HepG2 (cell line): ENCODE measurements at regions of chr13 and their contacts with region 1.

Region 1: GRCh38 chr13:98653463-98653985 is 76.6 kb upstream of the STK24 start:
- DNase-seq: peak; percentile 63
- ATAC-seq: peak; percentile 93
- H3K4me3 ChIP-seq: no peak overlapping the region
- H3K27ac ChIP-seq: no peak overlapping the region
- H3K4me1 ChIP-seq: peaks cover 50% of the 10 kb centered on the region
- H3K27me3 ChIP-seq: peaks cover 0 to 3% of the 10 kb centered on the region in 2 experiments; a peak in 2 of 5 replicates
- CTCF ChIP-seq: peak; percentile 91
- EP300 ChIP-seq: no peak
- POLR2A ChIP-seq: no peak
- RAD21 ChIP-seq: peak; percentile 82

Region 2: DNA sequence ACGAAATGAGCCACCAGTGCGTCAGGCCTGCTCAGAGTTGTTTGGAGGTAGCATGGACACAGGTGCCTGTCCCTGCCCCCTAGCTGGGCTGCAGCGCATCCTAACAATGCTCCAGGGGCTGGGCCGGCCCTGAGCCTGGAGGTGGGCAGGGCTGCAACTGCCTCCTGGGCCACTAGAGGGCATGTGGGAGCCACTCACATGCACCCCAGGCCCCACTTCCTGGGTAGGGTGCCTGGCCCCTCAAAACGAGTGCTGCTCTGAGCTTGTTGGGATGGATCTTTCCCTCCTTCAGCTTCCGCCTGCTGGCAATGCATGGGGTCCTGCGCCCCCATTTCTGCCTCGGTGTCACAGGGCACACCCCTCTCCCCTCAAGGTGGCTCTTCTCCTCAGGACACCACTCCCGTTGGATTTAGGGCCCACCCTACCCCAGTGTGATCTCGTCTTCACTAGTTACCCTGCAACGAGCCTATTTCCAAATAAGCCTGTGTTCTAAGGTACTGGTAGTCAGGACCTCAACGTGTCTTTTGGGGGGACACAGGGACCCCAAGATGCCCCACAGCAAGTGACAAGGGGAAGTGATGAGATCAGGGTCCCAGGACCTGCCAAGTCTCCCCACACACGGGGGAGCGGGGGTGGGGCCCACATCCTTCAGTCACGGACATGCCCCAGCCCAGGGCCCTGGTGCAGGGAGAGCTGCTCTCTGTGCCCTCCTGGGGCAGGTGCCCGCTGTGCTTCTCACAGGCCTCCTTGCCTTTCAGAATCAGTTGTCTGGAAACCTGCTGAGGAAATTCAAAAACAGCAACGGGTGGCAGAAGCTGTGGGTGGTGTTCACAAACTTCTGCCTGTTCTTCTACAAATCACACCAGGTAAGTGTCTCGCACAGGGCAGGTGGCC is 207.9 kb before region 1 on chr13:
- CTCF ChIA-PET with region 1: interaction called, 12 read pairs
- POLR2A ChIA-PET with region 1: interaction called, 3 read pairs
- in situ Hi-C with region 1: loop called (anchors 10 kb)
- intact Hi-C with region 1: loop called (anchors 5 kb)
- DNase-seq: peak; percentile 42
- ATAC-seq: peak; percentile 76
- H3K4me3 ChIP-seq: no peak overlapping the region
- H3K27ac ChIP-seq: no peak overlapping the region
- H3K4me1 ChIP-seq: peaks cover 12% of the 10 kb centered on the region
- H3K27me3 ChIP-seq: no peaks in the 10 kb centered on the region
- CTCF ChIP-seq: peak; percentile 97
- EP300 ChIP-seq: no peak
- POLR2A ChIP-seq: peak in 1 of 2 experiments; percentile 36; a peak in 1 of 4 replicates
- RAD21 ChIP-seq: peak; percentile 79

Region 3: DNA sequence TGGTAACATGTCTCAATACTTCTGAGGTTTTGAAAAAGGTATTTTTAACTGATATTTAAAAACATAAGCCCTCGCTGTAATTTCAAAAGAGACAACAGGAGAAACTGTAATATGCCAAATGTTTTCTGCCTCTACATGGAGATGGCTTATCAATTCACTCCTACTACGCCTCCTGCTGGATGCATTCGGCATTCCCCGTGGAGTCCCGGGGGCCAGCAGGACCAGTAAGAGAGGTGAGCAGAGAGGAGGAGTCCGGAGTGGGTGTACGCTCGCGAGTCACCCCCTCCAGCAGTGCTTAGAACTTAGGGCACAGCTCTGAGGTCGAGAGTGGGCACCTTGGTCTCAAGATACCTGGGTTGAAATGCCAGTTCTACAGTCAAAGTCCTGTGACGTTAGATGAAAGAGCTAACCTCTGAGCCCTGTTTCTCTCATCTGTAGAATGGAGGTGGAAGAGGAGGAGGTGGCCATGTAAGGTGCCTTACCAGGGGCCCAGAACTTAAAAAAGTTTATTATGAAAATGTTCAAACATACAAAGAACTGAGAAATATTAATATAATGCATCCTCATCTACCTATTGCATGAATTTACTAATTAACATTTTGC is 186.8 kb before region 1 on chr13:
- CTCF ChIA-PET with region 1: no interaction called
- POLR2A ChIA-PET with region 1: no interaction called
- in situ Hi-C with region 1: no loop called
- intact Hi-C with region 1: loop called (anchors 2 kb)
- DNase-seq: peak; percentile 43
- ATAC-seq: peak; percentile 74
- H3K4me3 ChIP-seq: no peak overlapping the region
- H3K27ac ChIP-seq: no peak overlapping the region
- H3K4me1 ChIP-seq: peaks cover 16% of the 10 kb centered on the region
- H3K27me3 ChIP-seq: no peaks in the 10 kb centered on the region
- CTCF ChIP-seq: peak; percentile 69
- EP300 ChIP-seq: no peak
- POLR2A ChIP-seq: no peak
- RAD21 ChIP-seq: peak; percentile 33

Region 4: DNA sequence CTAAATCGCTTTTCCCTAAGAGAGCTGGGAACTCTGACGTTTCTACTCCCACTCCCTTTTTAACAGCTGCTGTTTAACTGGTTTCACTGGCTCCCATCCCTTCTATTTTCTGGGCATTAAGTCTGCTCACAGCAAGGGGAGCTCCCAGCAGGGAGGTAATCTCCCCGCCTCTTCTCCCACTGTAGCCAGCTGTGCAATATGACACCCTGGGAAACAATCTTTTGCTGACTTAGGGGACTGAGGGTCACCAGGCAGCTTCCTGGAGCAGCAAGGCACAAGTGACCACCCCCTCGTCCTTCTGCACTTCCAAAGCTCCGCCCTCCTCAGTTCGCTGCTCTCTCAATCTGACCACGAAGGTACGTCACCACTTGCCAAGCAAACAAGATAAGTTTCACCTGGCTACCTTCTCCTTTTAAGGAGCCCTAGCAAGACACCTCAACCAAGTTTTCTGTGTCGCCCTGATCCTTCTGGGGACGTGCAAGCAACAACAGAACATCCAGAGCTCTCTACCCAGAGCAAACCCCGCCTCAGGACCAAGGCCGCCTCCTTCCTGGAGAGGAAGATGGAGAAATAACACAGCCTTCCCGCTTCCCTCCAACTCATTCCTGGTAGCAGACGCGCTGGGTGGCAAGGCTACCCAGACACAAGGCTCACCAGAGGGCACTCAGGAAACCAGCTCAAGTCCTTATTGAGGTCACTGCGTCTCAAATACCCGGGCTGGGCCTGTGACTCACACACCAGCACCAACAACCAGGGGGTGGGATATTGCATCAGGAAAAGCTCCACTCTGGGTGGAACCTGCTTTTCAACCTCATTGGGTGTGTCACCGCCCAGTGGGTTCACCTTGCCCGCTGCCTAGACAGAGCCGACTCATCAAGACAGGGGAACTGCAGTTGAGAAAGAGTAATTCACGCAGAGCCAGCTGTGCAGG is 169.0 kb before region 1 on chr13:
- CTCF ChIA-PET with region 1: no interaction called
- POLR2A ChIA-PET with region 1: interaction called, 5 read pairs
- in situ Hi-C with region 1: loop called (anchors 5 kb)
- intact Hi-C with region 1: loop called (anchors 5 kb)
- DNase-seq: peak; percentile 91
- ATAC-seq: peak; percentile 93
- H3K4me3 ChIP-seq: peak overlapping the region; percentile 23 to 66 (median 34); a peak in 5 of 6 replicates
- H3K27ac ChIP-seq: peak overlapping the region; percentile 88
- H3K4me1 ChIP-seq: peaks cover 92% of the 10 kb centered on the region
- H3K27me3 ChIP-seq: no peaks in the 10 kb centered on the region
- CTCF ChIP-seq: no peak
- EP300 ChIP-seq: peak in 1 of 2 experiments; percentile 24; a peak in 1 of 4 replicates
- POLR2A ChIP-seq: no peak
- RAD21 ChIP-seq: no peak

Region 5: DNA sequence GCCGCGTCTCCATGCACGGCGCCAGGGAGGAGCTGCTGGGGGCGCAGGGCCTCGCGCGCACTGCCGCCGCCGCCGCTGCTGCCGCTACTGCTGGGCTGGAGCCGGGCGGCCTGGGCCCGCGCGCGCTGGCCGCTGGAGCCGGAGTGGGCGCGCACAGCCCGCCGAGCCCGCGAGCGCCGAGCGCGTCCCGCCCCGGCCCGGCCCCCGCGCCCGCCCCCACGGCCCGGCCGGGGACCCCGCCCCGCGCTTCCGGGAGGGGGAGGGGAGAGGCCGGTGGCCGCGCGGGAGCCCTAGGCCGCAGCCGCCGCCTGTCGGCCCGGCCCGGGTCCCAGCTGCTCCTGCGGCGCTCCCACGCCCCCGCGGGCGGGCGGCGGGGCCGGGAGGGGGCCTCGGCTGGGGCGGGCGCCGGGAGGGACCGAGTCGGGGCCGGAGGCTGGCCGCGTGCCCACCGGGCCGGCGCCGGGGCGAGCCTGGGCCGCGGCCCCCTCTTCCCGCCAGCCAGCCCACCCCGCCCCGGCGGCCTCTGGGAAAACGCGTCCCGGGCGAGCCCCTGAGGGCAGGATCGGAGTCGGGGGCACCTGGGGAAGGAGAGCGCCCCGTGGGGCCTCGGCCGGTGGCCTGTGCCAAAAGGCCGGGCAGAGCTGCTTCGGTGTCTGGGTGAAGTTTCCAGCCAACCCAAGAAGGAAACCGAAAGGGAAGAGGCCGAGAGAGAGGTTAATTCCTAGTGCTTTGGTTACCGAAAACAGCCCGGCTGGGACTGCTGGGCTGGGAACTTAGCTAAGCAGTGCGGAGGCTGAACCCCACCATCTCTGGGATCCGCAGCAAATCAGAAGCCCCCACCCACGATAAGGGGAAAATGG is 76.3 kb before region 1 on chr13 and contains the start of gene STK24:
- CTCF ChIA-PET with region 1: no interaction called
- POLR2A ChIA-PET with region 1: interaction called, 5 read pairs
- in situ Hi-C with region 1: no loop called
- intact Hi-C with region 1: loop called (anchors 10 kb)
- DNase-seq: peak; percentile 34
- ATAC-seq: peak; percentile 63
- H3K4me3 ChIP-seq: peak within 1 kb of the TSS; percentile 89 to 96 (median 95)
- H3K27ac ChIP-seq: peak within 1 kb of the TSS; percentile 96
- H3K4me1 ChIP-seq: peaks cover 46% of the 10 kb centered on the region
- H3K27me3 ChIP-seq: no peaks in the 10 kb centered on the region; a peak in 1 of 5 replicates
- CTCF ChIP-seq: no peak
- EP300 ChIP-seq: no peak
- POLR2A ChIP-seq: peak in 1 of 2 experiments; percentile 84; a peak in 3 of 4 replicates
- RAD21 ChIP-seq: peak; percentile 10; the same call in 1 of the 2 replicates
- total RNA-seq, gene STK24: 73.0 and 78.3 TPM in 2 replicates